ENCODE measurements at regions of chr19 and their contacts with region 1.

Region 1: GRCh38 chr19:12162882-12163806 is at the start of gene ZNF136:
- DNase-seq: peak; percentile 90
- H3K4me3 Mint-ChIP-seq: peak within 1 kb of the TSS; percentile 94
- H3K27ac Mint-ChIP-seq: peak within 1 kb of the TSS; percentile 93
- H3K4me1 Mint-ChIP-seq: peaks cover 28% of the 10 kb centered on the region
- H3K27me3 Mint-ChIP-seq: no peaks in the 10 kb centered on the region
- total RNA-seq, gene ZNF136: 10.1 and 10.8 TPM in 2 replicates

Region 2: GRCh38 chr19:11738746-11739620 is 424.2 kb before region 1 on chr19 and contains the start of gene ZNF823:
- intact Hi-C with region 1: loop called (anchors 1 kb)
- DNase-seq: peak; percentile 91
- H3K4me3 Mint-ChIP-seq: peak within 1 kb of the TSS; percentile 98
- H3K27ac Mint-ChIP-seq: peak within 1 kb of the TSS; percentile 92
- H3K4me1 Mint-ChIP-seq: peaks cover 19% of the 10 kb centered on the region
- H3K27me3 Mint-ChIP-seq: peaks cover 3% of the 10 kb centered on the region
- total RNA-seq, gene ZNF823: 2.5 and 2.8 TPM in 2 replicates

Region 3: GRCh38 chr19:12035220-12036153 is 127.7 kb before region 1 on chr19 and contains the start of gene ZNF433:
- intact Hi-C with region 1: no loop called
- DNase-seq: peak; percentile 12
- H3K4me3 Mint-ChIP-seq: peak within 1 kb of the TSS; percentile 79
- H3K27ac Mint-ChIP-seq: no peak within 1 kb of the TSS
- H3K4me1 Mint-ChIP-seq: no peaks in the 10 kb centered on the region
- H3K27me3 Mint-ChIP-seq: no peaks in the 10 kb centered on the region
- total RNA-seq, gene ZNF433: 0.39 TPM in 1 of 2 replicates, not detected in the other

Region 4: DNA sequence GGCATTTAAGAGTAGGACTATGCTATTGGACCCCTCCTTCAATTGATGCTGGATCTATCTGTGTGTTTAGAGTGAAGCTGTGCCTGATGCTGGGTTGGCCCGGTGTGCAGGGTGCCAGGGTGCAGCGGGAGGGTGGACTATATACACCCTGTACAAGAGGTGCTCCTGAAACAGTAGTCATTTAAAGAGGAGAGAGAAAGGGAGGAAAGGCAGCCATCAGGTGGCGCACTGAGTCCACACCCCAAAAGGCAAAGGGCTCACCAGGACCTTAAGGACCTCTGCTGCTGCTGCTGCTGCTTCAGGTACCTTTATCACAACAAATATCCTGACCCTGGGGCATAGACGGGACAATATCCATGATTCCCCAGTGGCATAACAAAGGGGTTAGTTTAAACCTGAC is 39.1 kb after region 1 on chr19:
- intact Hi-C with region 1: no loop called
- DNase-seq: peak; percentile 13
- H3K4me3 Mint-ChIP-seq: no peak overlapping the region
- H3K27ac Mint-ChIP-seq: no peak overlapping the region
- H3K4me1 Mint-ChIP-seq: no peaks in the 10 kb centered on the region
- H3K27me3 Mint-ChIP-seq: no peaks in the 10 kb centered on the region

Region 5: DNA sequence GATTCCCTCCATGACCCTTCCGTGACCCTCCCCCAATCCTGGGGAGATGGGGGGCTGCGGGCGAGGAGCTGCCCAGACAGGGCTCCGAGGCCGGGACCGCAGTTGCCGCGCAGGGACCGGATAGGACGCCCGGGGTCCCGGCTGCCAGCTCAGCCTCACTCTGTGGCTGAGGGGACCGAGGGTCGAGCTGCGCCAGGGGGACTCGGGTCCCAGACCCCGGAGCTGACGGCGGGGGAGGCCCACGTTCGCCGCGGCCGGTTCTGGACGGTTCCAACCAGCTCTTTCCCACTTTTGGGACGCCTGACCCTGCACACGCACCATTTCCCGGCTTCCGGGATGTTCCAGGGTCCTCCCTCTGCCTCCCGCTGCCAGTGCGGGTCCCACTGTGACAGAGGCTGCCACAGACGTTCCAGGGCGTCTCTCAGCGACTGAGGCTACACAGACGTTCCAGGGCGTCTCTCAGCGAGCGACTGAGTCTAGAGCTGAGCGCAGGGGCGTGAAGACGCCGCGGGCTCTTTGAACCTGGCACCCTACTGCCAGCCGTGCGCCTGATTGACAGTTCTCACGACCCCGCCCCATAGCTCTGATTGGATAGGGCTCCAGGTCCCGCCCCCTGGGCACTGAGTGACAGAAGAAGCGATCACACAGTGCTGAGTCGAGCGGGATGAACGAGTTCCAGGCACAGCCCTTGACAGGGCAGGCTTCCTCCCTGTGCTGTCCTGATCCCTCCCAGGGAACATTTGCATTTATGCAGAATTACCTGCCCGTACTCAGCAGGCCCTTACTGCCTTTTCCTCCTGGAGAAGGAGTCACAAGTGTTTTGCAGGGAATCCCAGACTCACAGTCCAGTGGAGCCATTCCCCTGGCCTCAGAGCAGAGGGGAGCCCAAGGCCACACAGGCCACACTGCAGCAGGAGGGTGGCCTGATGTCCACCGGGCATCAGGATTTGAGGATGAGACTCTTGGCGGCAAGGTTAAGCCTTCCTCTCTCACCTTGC is 170.3 kb after region 1 on chr19 and contains the start of gene ZNF563:
- intact Hi-C with region 1: loop called (anchors 1 kb)
- DNase-seq: peak; percentile 96
- H3K4me3 Mint-ChIP-seq: peak within 1 kb of the TSS; percentile 96
- H3K27ac Mint-ChIP-seq: peak within 1 kb of the TSS; percentile 96
- H3K4me1 Mint-ChIP-seq: peaks cover 38% of the 10 kb centered on the region
- H3K27me3 Mint-ChIP-seq: no peaks in the 10 kb centered on the region
- total RNA-seq, gene ZNF563: 1.4 and 2.5 TPM in 2 replicates

Region 6: GRCh38 chr19:12400633-12401502 is 237.7 kb after region 1 on chr19 and contains the start of gene ZNF799:
- intact Hi-C with region 1: loop called (anchors 2 kb)
- DNase-seq: peak; percentile 81
- H3K4me3 Mint-ChIP-seq: peak within 1 kb of the TSS; percentile 93
- H3K27ac Mint-ChIP-seq: peak within 1 kb of the TSS; percentile 68
- H3K4me1 Mint-ChIP-seq: peaks cover 24% of the 10 kb centered on the region
- H3K27me3 Mint-ChIP-seq: no peaks in the 10 kb centered on the region
- total RNA-seq, gene ZNF799: 3.1 TPM in 2 replicates

Region 7: GRCh38 chr19:12484371-12485051 is 321.4 kb after region 1 on chr19 and contains the start of gene ZNF709:
- intact Hi-C with region 1: loop called (anchors 1 kb)
- DNase-seq: peak; percentile 79
- H3K4me3 Mint-ChIP-seq: peak within 1 kb of the TSS; percentile 91
- H3K27ac Mint-ChIP-seq: peak within 1 kb of the TSS; percentile 35
- H3K4me1 Mint-ChIP-seq: peaks cover 27% of the 10 kb centered on the region
- H3K27me3 Mint-ChIP-seq: no peaks in the 10 kb centered on the region
- total RNA-seq, gene ZNF709: 0.26 TPM in 1 of 2 replicates, not detected in the other